Endothelial cell of umbilical vein (primary cell): ENCODE measurements at regions of chr4 and their contacts with region 1.

Region 1: DNA sequence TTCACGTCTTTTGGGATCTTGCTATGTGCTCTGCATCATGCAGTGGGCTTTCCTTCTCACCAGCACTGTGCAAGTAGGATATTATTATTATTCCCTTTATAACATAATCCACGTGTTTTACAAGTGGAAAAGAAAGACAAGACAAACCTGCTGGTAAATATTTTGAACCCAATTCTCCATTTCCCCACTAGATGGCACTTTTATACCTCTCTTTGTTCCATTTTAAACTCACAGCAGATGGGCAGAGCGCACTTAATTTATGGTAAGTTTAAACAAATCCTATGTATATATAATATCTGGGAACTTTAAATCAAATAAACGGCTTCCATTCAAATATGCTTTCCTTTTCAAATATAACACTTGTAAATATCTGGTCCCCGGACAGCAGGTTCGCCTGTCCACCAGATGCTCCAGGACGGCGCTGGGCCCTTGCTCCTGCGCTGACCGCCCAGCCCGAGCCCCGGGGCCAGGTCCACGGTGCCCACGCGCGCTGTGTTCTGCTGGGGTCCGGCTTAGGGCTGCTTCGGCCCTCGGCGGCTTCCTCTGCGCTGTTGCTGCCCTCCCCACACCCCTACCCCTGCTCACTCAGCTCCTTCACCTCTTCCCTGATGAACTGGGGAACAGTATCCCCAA is 31.1 kb downstream of the F11 start:
- DNase-seq: peak; percentile 51
- H3K4me3 ChIP-seq: no peak overlapping the region
- H3K27ac ChIP-seq: no peak overlapping the region
- H3K4me1 ChIP-seq: no peaks in the 10 kb centered on the region
- H3K27me3 ChIP-seq: peaks cover 0 to 2% of the 10 kb centered on the region in 2 experiments
- CTCF ChIP-seq: peak; percentile 26 to 54
- POLR2A ChIP-seq: no peak

Region 2: DNA sequence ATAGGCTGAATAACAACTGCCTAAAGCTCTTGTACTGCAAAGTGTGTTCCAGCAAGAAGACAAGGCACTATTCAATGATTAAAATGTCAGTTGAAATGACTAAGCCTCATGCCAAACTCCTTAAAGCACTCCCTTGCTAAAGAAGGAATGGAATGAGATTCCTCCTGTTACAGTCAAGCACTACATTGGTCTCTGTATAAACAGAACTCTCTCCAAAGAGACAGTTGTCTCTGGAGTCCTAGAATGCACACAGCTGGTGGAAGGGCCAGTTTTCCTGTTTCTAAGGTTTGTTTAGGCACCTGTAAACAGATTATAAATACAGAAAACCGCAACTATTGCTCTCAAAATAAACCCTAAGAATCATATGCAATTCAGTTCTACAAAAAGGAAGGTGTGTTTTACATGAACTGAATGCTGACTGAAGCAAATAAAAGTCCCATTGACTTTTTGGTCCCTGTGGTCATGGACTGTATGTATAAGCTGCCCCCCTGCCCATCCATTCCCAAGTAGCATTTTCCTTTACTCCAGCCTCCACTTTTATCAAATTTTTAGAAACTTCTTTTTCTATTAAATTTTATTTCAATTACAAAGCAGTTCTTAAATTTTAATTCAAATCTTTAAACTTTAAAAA is 379.5 kb after region 1 on chr4:
- CTCF ChIA-PET with region 1: no interaction called
- POLR2A ChIA-PET with region 1: no interaction called
- dilution Hi-C with region 1: no loop called
- intact Hi-C with region 1: loop called (anchors 5 kb)
- DNase-seq: no peak
- H3K4me3 ChIP-seq: no peak overlapping the region
- H3K27ac ChIP-seq: no peak overlapping the region
- H3K4me1 ChIP-seq: no peaks in the 10 kb centered on the region
- H3K27me3 ChIP-seq: no peaks in the 10 kb centered on the region
- CTCF ChIP-seq: no peak
- POLR2A ChIP-seq: no peak